ENCODE measurements at regions of chr15 and their contacts with region 1.

Region 1: DNA sequence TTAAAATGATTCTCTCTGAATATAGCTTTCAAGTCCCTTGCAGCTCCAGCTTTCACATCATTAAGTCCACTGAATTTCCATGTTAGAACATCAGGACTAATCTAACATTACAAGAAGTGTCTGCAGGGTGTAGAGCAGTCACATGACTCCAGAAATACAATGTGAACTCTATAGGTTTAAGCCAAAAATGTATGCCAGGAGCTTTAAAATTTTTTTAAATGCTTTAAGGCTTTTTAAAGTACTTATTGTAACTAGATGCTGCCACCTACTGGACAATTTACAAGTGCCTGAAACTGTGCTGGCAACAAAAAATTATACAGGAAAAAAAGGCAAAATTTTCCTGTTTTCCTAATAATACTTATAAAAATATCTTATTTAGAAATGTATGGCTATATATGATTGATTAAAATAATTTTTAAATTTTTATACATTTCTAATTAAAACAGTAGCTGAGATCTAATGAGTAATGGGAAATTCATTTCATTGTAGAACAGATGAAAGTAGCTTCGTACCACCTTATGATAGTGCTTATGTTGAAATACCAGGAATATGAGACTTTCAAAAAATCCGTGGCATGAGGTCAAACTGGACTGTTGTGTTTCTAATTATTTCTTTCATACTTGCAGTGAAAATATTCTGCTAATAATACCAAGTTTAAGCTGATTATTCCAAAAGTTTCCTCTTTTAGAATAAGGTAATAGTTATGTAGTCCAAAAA is 25.7 kb downstream of the FSIP1 start:
- DNase-seq: peak; percentile 22 to 62 (median 44)
- H3K4me3 ChIP-seq: no peak overlapping the region
- H3K4me3 Mint-ChIP-seq: no peak overlapping the region
- H3K27ac ChIP-seq: no peak overlapping the region
- H3K27ac Mint-ChIP-seq: no peak overlapping the region
- H3K4me1 ChIP-seq: no peaks in the 10 kb centered on the region
- H3K4me1 Mint-ChIP-seq: no peaks in the 10 kb centered on the region
- H3K27me3 ChIP-seq: no peaks in the 10 kb centered on the region
- H3K27me3 Mint-ChIP-seq: peaks cover 0 to 3% (median 0%) of the 10 kb centered on the region in 3 donors
- CTCF ChIP-seq: peak; percentile 85

Region 2: DNA sequence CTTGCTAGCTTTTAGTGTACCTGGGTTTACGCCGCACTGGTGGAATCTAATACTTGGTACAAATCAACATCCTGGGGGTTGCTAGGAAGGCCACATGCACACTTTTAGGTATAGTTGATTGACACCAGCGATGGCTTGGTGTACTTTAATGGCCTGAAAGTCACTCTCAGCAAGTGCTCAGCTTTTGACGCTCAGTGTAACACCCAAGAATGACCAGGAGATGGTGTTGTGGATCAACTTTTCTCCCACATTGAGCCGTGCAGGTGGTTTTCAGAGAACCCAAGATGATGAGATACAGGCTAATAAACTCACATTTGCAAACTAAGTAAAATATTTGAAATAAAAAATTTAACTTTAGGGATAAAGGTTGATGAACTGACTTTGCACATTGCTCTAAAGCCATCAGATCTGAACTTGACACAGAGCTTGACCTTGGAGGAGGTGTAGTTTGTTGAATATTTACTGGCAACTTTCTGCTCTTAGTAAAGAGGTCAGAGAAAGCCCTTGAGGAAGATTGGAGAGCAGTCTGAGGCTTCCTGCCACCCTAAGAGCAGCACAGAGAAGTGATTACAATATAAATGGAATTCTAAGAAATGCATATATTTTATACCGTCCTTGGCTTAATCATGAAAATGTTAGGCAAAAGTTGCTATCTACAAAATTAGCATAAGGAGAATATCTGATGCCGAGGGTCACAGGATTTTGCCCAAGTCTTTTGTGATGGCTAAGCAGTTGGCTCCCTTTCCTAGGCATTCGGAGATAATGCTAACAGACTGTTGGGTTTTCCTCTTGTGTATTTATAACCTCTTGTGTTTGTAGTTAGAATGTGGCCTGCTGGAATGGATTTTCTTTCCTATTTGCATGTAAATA is 1048.9 kb before region 1 on chr15:
- intact Hi-C with region 1: loop called in 1 of 2 experiments (anchors 5 kb)
- DNase-seq: peak in 1 of 3 donors; percentile 6
- H3K4me3 ChIP-seq: no peak overlapping the region
- H3K4me3 Mint-ChIP-seq: no peak overlapping the region
- H3K27ac ChIP-seq: no peak overlapping the region
- H3K27ac Mint-ChIP-seq: no peak overlapping the region
- H3K4me1 ChIP-seq: no peaks in the 10 kb centered on the region
- H3K4me1 Mint-ChIP-seq: no peaks in the 10 kb centered on the region
- H3K27me3 ChIP-seq: no peaks in the 10 kb centered on the region
- H3K27me3 Mint-ChIP-seq: peaks cover 0 to 3% (median 3%) of the 10 kb centered on the region in 3 donors
- CTCF ChIP-seq: peak; percentile 71

Region 3: DNA sequence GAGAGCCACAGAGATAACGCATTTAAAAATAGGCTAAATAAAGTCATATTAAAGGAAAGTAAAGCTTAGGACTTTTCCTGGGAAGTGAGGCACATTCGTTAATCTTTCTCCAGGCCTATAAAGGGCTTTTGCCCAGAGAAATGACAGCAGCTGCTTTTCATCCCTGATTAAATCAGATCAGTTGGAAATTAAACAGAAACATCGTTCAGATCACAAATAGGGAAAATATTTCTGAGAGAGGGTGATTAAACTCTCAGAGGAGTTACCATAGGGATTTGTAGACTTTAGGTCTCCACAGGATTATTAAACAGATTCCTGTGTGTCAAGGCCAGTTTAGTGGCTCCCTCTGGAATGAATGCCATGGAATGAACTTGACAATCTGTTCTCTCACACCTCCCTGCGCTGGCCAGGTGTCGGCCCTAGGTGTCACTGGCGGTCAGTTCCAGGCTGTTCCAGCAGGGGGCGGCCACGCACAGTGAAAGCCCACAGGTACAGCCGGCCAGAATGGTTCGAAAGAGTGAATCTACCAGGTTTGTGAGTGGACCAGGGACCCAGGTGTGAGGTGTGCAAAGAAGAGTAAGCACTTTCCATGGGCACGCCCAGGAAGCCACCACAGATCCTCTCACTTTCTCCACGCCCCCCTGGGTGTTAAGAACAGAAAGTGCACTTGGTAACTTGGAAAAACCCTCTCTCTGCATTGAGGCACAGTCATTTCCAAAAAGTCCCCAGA is 939.4 kb before region 1 on chr15:
- intact Hi-C with region 1: loop called (anchors 5 kb)
- DNase-seq: peak; percentile 34 to 46 (median 44)
- H3K4me3 ChIP-seq: no peak overlapping the region
- H3K4me3 Mint-ChIP-seq: no peak overlapping the region
- H3K27ac ChIP-seq: no peak overlapping the region
- H3K27ac Mint-ChIP-seq: no peak overlapping the region
- H3K4me1 ChIP-seq: no peaks in the 10 kb centered on the region
- H3K4me1 Mint-ChIP-seq: peaks cover 3% of the 10 kb centered on the region
- H3K27me3 ChIP-seq: no peaks in the 10 kb centered on the region
- H3K27me3 Mint-ChIP-seq: peaks cover 0 to 8% (median 3%) of the 10 kb centered on the region in 3 donors
- CTCF ChIP-seq: peak; percentile 99

Region 4: DNA sequence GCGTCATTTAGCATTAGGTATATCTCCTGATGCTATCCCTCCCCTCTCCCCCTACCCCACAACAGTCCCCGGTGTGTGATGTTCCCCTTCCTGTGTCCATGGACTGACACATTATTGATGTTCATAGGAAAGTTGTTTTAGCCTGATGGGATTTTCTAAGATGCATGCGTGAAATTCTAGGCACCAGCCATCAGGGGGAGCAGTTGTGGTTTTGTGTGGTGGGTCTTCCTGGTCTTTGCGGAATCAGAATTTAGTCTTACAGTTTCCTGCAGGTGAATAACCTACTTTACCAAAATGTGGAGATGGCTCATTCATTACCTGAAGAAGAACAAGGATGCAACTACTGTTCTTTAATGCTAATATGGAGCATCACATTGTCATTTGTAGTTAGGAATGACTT is 631.1 kb before region 1 on chr15:
- intact Hi-C with region 1: loop called (anchors 5 to 10 kb)
- DNase-seq: peak; percentile 27 to 45 (median 30)
- H3K4me3 ChIP-seq: no peak overlapping the region
- H3K4me3 Mint-ChIP-seq: no peak overlapping the region
- H3K27ac ChIP-seq: no peak overlapping the region
- H3K27ac Mint-ChIP-seq: no peak overlapping the region
- H3K4me1 ChIP-seq: no peaks in the 10 kb centered on the region
- H3K4me1 Mint-ChIP-seq: no peaks in the 10 kb centered on the region
- H3K27me3 ChIP-seq: no peaks in the 10 kb centered on the region
- H3K27me3 Mint-ChIP-seq: peaks cover 2 to 3% (median 2%) of the 10 kb centered on the region in 3 donors
- CTCF ChIP-seq: peak; percentile 76

Region 5: DNA sequence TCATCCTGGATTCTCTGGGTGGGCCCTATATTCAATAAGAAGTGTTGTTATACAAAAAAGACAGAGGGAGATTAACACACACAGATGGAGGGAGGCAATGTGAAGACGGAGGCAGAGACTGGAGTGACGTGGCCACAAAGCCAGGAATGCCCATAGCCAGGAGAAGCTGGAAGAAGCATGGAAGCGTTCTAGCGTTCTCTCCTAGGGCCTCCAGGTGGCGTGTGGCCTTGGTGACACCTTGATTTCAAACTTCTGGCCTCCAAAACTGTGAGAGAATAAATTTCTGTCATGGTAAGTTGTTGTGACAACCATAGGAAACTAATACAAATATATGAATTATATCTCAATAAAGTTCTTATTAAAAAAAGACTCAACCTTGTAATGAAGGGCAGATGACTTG is 154.8 kb before region 1 on chr15:
- intact Hi-C with region 1: no loop called
- DNase-seq: no peak
- H3K4me3 ChIP-seq: no peak overlapping the region
- H3K4me3 Mint-ChIP-seq: no peak overlapping the region
- H3K27ac ChIP-seq: no peak overlapping the region
- H3K27ac Mint-ChIP-seq: no peak overlapping the region
- H3K4me1 ChIP-seq: no peaks in the 10 kb centered on the region
- H3K4me1 Mint-ChIP-seq: no peaks in the 10 kb centered on the region
- H3K27me3 ChIP-seq: no peaks in the 10 kb centered on the region
- H3K27me3 Mint-ChIP-seq: peaks cover 0 to 5% (median 2%) of the 10 kb centered on the region in 3 donors
- CTCF ChIP-seq: no peak

Measured in CD14-positive monocyte (primary cell).